Heart right ventricle (tissue), 16 donors: ENCODE measurements at regions of chr5 and their contacts with region 1.

Region 1: GRCh38 chr5:81859624-81860023 is 108.7 kb upstream of the SSBP2 start:
- DNase-seq: no peak
- ATAC-seq: no peak
- H3K4me3 ChIP-seq: no peak overlapping the region
- H3K27ac ChIP-seq: no peak overlapping the region
- H3K4me1 ChIP-seq: peaks cover 0 to 37% (median 19%) of the 10 kb centered on the region in 9 donors
- H3K27me3 ChIP-seq: no peaks in the 10 kb centered on the region
- CTCF ChIP-seq: no peak

Region 2: GRCh38 chr5:81884871-81885270 is 25.2 kb after region 1 on chr5:
- intact Hi-C with region 1: no loop called
- DNase-seq: peak in 1 of 2 donors; percentile 18
- ATAC-seq: peak in 5 of 8 donors; percentile 47 to 75 (median 70)
- H3K4me3 ChIP-seq: no peak overlapping the region
- H3K27ac ChIP-seq: no peak overlapping the region
- H3K4me1 ChIP-seq: no peaks in the 10 kb centered on the region
- H3K27me3 ChIP-seq: no peaks in the 10 kb centered on the region
- CTCF ChIP-seq: peak in 7 of 9 donors; percentile 6 to 55 (median 37)

Region 3: DNA sequence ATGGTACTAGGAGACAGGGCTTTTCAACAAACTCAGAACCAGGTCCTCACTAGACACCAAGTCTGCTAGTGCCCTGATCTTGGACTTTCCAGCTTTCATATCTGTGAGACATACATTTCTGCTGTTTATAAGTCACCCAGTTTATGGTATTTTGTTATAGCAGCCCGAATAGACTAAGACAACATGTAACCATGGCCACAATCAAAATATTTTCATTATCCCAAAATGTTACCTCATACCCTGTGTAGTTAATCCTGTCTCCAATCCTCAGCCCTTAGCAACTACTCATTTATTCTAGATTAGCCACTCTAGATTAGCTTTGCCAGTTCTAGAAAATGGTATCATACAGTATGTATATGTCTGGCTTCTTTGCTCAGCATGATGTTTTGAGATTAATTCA is 105.9 kb after region 1 on chr5:
- intact Hi-C with region 1: loop called in 8 of 10 experiments (anchors 5 to 10 kb)
- DNase-seq: no peak
- ATAC-seq: no peak
- H3K4me3 ChIP-seq: no peak overlapping the region
- H3K27ac ChIP-seq: no peak overlapping the region
- H3K4me1 ChIP-seq: peaks cover 0 to under 1% (median 0%) of the 10 kb centered on the region in 9 donors
- H3K27me3 ChIP-seq: no peaks in the 10 kb centered on the region
- CTCF ChIP-seq: no peak

Region 4: DNA sequence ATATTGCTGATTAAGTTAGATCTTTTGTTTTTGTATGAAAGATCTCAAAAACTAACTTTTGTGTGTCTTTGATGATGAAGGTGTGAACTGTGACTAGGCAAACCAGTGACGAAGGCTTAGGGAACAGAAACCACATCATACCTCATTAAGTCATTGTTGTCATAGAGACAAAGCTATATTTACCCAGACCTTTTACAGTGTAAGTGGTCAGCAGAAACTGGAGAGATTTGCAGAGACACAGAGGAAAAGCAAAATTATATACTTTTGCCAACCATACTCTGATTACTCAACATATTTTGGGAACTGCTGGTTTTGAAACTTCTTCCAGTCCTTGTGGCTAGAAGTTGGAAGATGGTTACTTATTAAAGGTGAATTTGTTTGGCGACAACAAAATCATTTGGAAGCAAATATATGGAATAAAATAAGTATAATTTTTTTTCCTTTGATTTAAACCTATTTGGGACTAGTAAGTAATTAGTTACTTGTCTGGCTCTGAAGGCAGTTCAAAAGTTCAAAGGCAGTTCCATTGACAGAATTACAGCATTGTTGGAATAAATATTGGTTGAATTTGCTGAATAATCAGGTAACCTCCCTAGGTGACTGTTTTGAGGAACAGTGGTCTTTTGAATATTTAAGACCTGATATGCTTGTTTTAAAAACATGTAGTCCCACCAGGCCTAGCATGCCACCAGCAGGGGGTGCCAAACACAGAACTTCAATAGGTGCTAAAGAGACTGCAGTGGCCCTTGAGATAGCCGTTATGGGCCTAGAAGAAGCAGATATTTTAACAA is 314.7 kb after region 1 on chr5:
- intact Hi-C with region 1: loop called in 4 of 10 experiments (anchors 5 to 10 kb)
- DNase-seq: peak; percentile 48 to 54
- ATAC-seq: peak in 7 of 8 donors; percentile 57 to 90 (median 75)
- H3K4me3 ChIP-seq: no peak overlapping the region
- H3K27ac ChIP-seq: peak overlapping the region in 1 of 10 donors; percentile 54
- H3K4me1 ChIP-seq: peaks cover 0 to 13% (median 0%) of the 10 kb centered on the region in 9 donors
- H3K27me3 ChIP-seq: no peaks in the 10 kb centered on the region
- CTCF ChIP-seq: peak; percentile 33 to 69 (median 59)